ENCODE measurements at regions of chr1 and their contacts with region 1.

Region 1: GRCh38 chr1:222582099-222582774 is 7.5 kb downstream of the TAF1A start:
- DNase-seq: peak in 1 of 2 experiments; percentile 84
- H3K4me3 ChIP-seq: no peak overlapping the region
- H3K27ac ChIP-seq: peak overlapping the region; percentile 69
- H3K4me1 ChIP-seq: peaks cover 32% of the 10 kb centered on the region
- H3K27me3 ChIP-seq: no peaks in the 10 kb centered on the region
- CTCF ChIP-seq: no peak

Region 2: GRCh38 chr1:224387302-224387912 is 1805.2 kb after region 1 on chr1:
- CTCF ChIA-PET with region 1: no interaction called
- POLR2A ChIA-PET with region 1: interaction called, 16 read pairs
- intact Hi-C with region 1: no loop called
- DNase-seq: no peak
- H3K4me3 ChIP-seq: no peak overlapping the region
- H3K27ac ChIP-seq: 0 out of 2 replicates have a peak overlapping the region, but pooled peaks have one; percentile 21
- H3K4me1 ChIP-seq: no peaks in the 10 kb centered on the region
- H3K27me3 ChIP-seq: no peaks in the 10 kb centered on the region
- CTCF ChIP-seq: no peak